Transverse colon (tissue), 4 donors: ENCODE measurements at regions of chr7 and their contacts with region 1.

Region 1: GRCh38 chr7:76095908-76096307 is 48.0 kb downstream of the MDH2 start:
- DNase-seq: no peak
- H3K4me3 ChIP-seq: no peak overlapping the region
- H3K27ac ChIP-seq: no peak overlapping the region
- H3K4me1 ChIP-seq: no peaks in the 10 kb centered on the region
- H3K27me3 ChIP-seq: no peaks in the 10 kb centered on the region
- CTCF ChIP-seq: no peak
- EP300 ChIP-seq: no peak
- POLR2A ChIP-seq: no peak

Region 2: GRCh38 chr7:76106893-76107292 is 11.0 kb after region 1 on chr7:
- in situ Hi-C with region 1: no loop called
- intact Hi-C with region 1: loop called (anchors 1 kb)
- DNase-seq: no peak
- H3K4me3 ChIP-seq: no peak overlapping the region
- H3K27ac ChIP-seq: peak overlapping the region in 1 of 4 donors; percentile 77
- H3K4me1 ChIP-seq: peaks cover 5 to 21% (median 18%) of the 10 kb centered on the region in 4 donors
- H3K27me3 ChIP-seq: no peaks in the 10 kb centered on the region
- CTCF ChIP-seq: no peak
- EP300 ChIP-seq: no peak
- POLR2A ChIP-seq: no peak

Region 3: DNA sequence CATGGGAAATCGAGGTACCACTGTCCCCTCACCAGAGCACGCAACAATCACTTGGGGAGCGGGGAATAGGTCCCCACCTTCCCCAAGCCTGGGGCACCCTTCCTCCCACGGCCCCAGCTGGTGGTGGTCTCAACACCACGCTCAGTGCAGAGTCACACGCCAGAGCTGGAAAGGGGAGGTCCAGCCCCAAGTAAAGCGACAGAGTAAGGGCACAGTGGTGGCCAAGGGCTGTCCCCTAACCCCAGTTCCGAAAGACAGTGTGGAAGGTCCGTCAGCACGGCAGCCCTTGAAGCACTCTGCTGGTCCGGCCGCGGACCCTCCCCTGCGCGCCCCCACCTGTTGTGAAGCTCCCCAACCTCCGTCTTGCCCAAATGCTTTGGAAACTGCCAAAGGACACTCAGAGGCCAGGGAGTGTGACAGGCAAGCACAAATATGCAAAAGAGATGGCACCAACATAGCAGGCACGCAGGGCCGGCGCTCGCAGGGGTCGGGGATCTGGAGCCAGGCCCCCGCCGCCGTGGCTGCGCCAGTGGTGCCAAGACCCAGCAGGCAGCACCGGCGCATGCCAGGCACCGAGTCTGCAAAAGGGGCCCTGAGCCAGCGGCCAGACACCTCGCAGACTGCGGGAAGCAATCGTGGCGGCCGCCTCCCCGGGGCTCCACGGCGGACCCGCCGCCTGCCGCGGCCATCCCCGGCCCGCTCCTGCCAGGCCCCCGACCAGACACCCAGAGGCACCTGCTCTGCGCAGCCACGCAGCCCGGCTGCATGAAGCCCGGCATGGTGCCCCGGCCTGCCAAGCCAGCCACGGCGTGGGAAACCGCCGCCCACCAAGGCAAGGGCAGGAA is 54.2 kb after region 1 on chr7:
- in situ Hi-C with region 1: no loop called
- intact Hi-C with region 1: no loop called
- DNase-seq: no peak
- H3K4me3 ChIP-seq: no peak overlapping the region
- H3K27ac ChIP-seq: no peak overlapping the region
- H3K4me1 ChIP-seq: peaks cover 0 to 9% (median 2%) of the 10 kb centered on the region in 4 donors
- H3K27me3 ChIP-seq: peaks cover 9% of the 10 kb centered on the region
- CTCF ChIP-seq: no peak
- EP300 ChIP-seq: no peak
- POLR2A ChIP-seq: no peak